ENCODE measurements at regions of chr15 and their contacts with region 1.

Region 1: DNA sequence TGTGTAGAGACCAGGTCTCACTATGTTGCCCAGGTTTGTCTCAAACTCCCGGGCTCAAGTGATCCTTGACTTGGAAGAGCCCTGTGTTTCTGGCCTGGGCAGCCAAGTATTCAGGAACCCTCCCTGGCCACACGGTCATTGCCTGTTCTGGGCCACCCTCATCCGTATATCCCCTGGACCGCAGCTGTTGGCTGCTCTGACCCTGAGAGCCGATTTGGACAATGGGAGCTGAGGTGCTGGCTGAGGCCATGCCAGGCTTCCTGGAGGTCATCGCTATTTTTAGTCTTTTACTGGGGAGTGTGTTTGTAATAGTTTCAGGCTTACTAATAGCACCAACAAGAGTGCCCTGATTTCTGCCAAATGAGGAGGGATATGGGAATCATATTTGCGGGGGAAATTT is 60.7 kb downstream of the ADAMTS7 start:
- DNase-seq: no peak
- ATAC-seq: peak; percentile 17 to 62

Region 2: DNA sequence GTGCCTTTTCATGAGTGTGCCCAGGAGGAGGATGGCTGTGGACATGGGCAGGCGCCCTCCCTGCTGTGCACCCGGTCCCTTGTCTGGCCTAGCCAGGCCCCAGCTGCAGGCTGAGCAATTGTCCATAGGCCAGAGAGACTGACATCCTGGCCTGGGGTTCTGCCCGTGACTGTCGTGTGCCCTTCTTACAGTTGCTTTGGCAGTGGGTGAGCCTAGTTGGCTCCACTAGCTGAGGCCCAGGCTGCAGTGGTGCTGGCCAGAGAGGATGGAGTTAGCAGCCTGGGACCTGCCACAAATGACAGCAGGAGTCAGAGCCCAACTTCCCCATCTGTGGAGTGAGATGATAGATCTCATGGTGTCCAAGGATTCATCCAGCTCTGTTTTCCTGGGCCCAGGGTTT is 100.5 kb before region 1 on chr15:
- intact Hi-C with region 1: no loop called
- DNase-seq: no peak
- ATAC-seq: no peak

Region 3: GRCh38 chr15:78811124-78811824 is 60.7 kb after region 1 on chr15 and contains the start of gene ADAMTS7:
- intact Hi-C with region 1: loop called in 1 of 2 experiments (anchors 5 kb)
- DNase-seq: peak; percentile 83
- ATAC-seq: peak; percentile 88 to 91
- total RNA-seq, gene ADAMTS7: 35.8 to 45.9 TPM

Region 4: DNA sequence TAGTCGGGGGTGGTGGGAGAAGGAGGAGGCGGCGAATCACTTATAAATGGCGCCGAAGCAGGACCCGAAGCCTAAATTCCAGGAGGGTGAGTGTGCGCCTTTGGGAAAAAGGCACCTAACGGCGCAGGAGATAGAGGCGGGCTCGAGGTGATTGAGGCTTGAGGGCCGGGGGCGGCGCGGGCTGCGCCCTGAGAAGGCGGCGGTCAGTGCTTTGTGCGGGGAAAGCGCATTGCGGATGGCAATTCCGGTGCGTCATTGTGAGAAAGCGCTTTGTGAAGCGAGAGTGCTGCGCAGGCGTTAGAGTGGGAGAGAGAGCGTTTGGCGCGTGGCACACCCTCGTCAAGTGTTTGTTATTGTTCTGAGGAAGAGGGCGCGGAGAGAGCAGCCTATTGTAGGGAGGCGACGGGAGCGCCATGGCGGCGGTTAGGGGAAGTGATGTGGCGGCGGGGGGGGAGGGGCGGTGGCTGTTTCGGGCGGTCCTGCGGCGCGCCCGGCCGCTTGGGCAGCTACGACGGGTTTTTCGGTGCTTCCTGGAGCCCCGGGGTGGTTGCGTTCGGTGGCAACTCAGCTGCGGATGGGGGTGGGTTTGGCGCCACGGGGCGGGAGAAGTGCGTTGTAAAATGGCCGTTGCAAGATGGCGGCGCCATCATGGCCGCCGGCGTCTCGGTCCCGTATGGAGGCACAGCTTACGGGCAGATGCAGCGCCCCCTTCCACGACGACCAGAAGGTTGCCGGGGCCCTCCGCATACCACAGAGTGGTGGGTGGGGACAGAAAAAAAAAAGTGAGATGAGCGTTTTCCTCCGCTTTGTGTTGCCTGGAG is 122.6 kb after region 1 on chr15:
- intact Hi-C with region 1: loop called in 1 of 2 experiments (anchors 10 kb)
- DNase-seq: peak; percentile 90
- ATAC-seq: peak; percentile 66 to 77